IMR-90 (cell line): ENCODE measurements at regions of chr3 and their contacts with region 1.

Region 1: GRCh38 chr3:9422712-9423424 is 25.5 kb downstream of the SETD5 start:
- DNase-seq: peak; percentile 98
- ATAC-seq: peak; percentile 91
- H3K4me3 ChIP-seq: no peak overlapping the region
- H3K27ac ChIP-seq: peak overlapping the region; percentile 61
- H3K4me1 ChIP-seq: peaks cover 2% of the 10 kb centered on the region; the same call in 1 of the 2 replicates
- H3K27me3 ChIP-seq: no peaks in the 10 kb centered on the region
- CTCF ChIP-seq: peak; percentile 64
- POLR2A ChIP-seq: peak; percentile 65
- RAD21 ChIP-seq: peak; percentile 76

Region 2: DNA sequence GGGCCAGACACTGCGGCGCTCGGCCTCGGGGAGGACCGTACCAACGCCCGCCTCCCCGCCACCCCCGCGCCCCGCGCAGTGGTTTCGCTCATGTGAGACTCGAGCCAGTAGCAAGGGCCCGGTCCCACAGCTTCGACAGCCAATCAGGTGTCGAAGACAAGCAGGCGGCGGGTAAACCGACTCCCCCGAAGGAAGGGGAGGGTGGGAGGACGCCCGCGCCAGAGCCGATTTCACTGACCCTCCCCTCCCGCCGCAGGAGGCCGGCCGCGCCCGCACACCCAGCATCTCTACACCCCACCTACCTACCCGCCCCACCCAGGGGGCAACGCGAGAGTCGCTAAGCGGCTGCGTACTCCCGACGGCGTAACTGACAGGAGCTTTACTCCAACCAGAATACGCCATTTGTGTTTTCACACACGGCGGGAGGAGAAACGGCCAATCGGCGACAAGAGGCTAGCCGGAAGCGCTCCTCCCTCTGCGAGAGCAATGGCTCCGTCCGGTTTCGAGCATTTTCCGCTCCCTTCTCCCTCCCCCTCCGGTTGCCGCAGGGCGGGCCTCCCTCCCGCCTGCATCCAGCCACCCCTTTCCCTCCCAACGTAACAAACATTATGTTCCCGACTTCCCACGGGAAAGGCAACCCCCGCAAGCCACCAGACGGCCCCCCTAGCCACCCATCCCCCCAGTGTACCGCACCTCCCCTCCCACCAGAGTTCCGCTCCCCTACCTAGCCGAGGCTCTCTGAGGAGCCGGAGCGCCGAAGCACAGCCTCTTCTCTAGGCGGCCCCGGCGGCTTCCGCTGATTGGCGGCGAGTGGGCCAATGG is 26.0 kb before region 1 on chr3:
- CTCF ChIA-PET with region 1: no interaction called
- POLR2A ChIA-PET with region 1: interaction called, 3 read pairs
- dilution Hi-C with region 1: no loop called
- in situ Hi-C with region 1: no loop called
- intact Hi-C with region 1: loop called (anchors 1 kb)
- DNase-seq: peak; percentile 100
- ATAC-seq: peak; percentile 75
- H3K4me3 ChIP-seq: peak overlapping the region; percentile 74
- H3K27ac ChIP-seq: peak overlapping the region; percentile 96
- H3K4me1 ChIP-seq: peaks cover 4% of the 10 kb centered on the region; the same call in 1 of the 2 replicates
- H3K27me3 ChIP-seq: no peaks in the 10 kb centered on the region
- CTCF ChIP-seq: no peak
- POLR2A ChIP-seq: peak; percentile 98
- RAD21 ChIP-seq: no peak